Natural killer cell (primary cell): ENCODE measurements at regions of chr19 and their contacts with region 1.

Region 1: GRCh38 chr19:44903602-44904425 is 1.8 kb upstream of the APOE start:
- DNase-seq: peak; percentile 79
- ATAC-seq: peak; percentile 73 to 92 (median 80)
- H3K4me3 ChIP-seq: no peak overlapping the region
- H3K4me3 Mint-ChIP-seq: no peak overlapping the region
- H3K27ac ChIP-seq: no peak overlapping the region
- H3K27ac Mint-ChIP-seq: no peak overlapping the region
- H3K4me1 ChIP-seq: peaks cover 4% of the 10 kb centered on the region
- H3K4me1 Mint-ChIP-seq: peaks cover 6 to 8% of the 10 kb centered on the region in 2 donors
- H3K27me3 ChIP-seq: peaks cover 12% of the 10 kb centered on the region
- H3K27me3 Mint-ChIP-seq: peaks cover 18 to 22% of the 10 kb centered on the region in 2 donors
- CTCF ChIP-seq: peak; percentile 98

Region 2: DNA sequence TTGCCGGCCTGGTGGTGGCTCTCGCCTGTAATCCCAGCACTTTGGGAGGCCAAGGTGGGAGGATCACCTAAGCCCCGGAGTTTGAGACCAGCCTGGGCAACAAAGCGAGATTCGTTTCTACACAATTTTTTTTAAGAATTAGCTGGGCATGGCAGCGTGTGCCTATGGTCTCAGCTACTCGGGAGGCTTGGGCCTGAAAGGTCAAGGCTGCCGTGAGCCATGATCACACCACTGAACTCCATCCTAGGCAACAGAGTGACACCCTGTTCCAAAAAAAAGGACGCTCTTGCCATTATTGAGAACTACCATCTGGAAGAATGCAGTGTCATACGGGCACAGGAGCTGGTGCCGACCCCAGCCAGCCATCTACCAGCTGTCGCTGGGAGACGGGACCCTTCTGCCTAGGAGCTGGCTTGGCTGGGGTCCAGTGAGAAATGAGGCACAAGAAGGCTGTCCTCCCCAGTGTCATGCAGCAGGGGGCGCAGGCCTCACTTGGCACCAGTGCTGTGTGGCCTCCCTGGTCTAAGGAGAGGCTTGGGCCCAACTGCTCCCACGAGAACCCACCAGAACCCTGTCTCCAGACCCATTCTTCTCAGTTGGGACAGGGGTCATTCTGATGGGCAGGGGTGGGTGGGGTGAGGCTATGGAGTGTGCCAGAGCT is 85.2 kb after region 1 on chr19:
- intact Hi-C with region 1: no loop called
- DNase-seq: peak; percentile 48 to 82
- ATAC-seq: peak; percentile 70 to 89 (median 71)
- H3K4me3 ChIP-seq: no peak overlapping the region
- H3K4me3 Mint-ChIP-seq: no peak overlapping the region
- H3K27ac ChIP-seq: no peak overlapping the region
- H3K27ac Mint-ChIP-seq: peak overlapping the region in 1 of 2 donors; percentile 13
- H3K4me1 ChIP-seq: peaks cover 32% of the 10 kb centered on the region
- H3K4me1 Mint-ChIP-seq: peaks cover 9 to 27% of the 10 kb centered on the region in 2 donors
- H3K27me3 ChIP-seq: no peaks in the 10 kb centered on the region
- H3K27me3 Mint-ChIP-seq: no peaks in the 10 kb centered on the region
- CTCF ChIP-seq: peak; percentile 57

Region 3: DNA sequence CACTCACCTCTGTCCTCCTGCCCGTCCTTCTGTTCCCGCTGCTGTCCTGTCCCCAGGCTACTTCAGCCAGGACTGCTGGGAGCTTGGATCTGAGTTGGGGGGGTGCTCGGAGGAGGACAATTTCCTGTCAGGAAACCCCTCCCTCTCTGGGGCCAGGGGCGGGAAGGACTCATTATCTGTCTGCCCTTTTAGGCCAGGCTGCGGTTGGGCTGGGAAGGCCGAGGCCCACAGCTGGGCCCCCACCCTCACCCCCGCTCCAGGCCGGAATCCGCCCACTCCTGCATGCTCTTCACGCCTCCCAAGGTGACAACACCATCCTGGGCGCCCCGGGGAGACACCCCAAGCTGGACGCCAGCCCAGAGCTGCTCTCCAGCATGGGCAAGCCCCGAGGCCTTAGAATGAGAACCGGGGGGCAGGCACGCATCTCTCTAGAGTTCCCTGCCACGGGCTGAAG is 341.5 kb after region 1 on chr19 and contains the start of gene EXOC3L2:
- intact Hi-C with region 1: loop called (anchors 5 kb)
- DNase-seq: no peak
- ATAC-seq: no peak
- H3K4me3 ChIP-seq: no peak within 1 kb of the TSS
- H3K4me3 Mint-ChIP-seq: no peak within 1 kb of the TSS
- H3K27ac ChIP-seq: no peak within 1 kb of the TSS
- H3K27ac Mint-ChIP-seq: no peak within 1 kb of the TSS
- H3K4me1 ChIP-seq: peaks cover 9% of the 10 kb centered on the region
- H3K4me1 Mint-ChIP-seq: peaks cover 4 to 7% of the 10 kb centered on the region in 2 donors
- H3K27me3 ChIP-seq: no peaks in the 10 kb centered on the region
- H3K27me3 Mint-ChIP-seq: peaks cover 0 to 7% of the 10 kb centered on the region in 2 donors
- CTCF ChIP-seq: no peak
- total RNA-seq, gene EXOC3L2: 0.16 to 0.23 TPM in 2 of 3 donors, not detected in the other